Caco-2 (cell line): ENCODE measurements at regions of chr15 and their contacts with region 1.

Region 1: DNA sequence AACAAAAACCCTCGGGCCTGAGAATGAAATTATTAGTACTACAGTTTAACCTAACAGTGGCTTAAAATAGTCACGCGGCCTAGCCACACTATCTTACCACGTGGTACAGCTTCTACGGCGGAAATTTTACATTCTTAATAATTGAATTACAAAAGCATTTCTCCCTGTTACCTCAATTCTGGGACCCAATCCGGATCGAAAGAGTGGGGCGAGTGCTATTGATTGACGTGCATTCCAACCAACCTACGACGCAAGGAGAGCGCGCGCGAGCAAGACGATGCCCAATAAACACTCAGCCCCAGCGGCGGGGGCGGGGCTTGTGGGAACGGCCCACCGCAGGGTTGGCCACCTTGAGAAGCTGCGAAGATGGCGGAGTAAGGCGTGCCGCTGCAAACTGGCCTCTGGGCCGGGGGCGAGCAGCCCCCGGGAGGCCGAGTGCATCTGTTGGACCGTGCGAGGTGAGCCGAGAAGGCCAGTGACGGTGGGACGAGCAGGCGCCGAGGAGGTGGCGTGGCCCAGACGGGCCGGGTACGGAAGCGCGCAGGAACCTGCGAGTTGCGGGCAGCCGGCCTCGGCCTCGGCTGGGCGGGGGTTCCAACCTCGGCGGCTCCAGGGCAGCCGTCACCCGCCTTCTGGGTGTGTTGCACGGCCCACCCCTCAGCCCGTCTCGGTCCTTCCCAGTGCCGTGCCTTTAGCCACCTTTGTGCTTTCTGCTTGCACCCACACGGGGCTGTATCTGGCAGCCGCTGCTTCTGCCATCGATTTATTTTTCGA is 48.6 kb downstream of the OIP5 start:
- DNase-seq: peak; percentile 98
- H3K4me3 ChIP-seq: peak overlapping the region; percentile 81
- H3K4me3 Mint-ChIP-seq: peak overlapping the region; percentile 95
- H3K27ac Mint-ChIP-seq: peak overlapping the region; percentile 97
- H3K4me1 ChIP-seq: peaks cover 11% of the 10 kb centered on the region; the same call in 1 of the 2 replicates
- H3K4me1 Mint-ChIP-seq: peaks cover 14% of the 10 kb centered on the region
- H3K27me3 ChIP-seq: no peaks in the 10 kb centered on the region
- H3K27me3 Mint-ChIP-seq: no peaks in the 10 kb centered on the region
- CTCF ChIP-seq: no peak

Region 2: GRCh38 chr15:41331833-41332787 is 48.3 kb after region 1 on chr15 and contains the start of gene OIP5:
- CTCF ChIA-PET with region 1: interaction called, 4 read pairs
- POLR2A ChIA-PET with region 1: interaction called, 10 read pairs
- intact Hi-C with region 1: loop called (anchors 2 kb)
- DNase-seq: peak; percentile 98 to 99
- H3K4me3 ChIP-seq: peak within 1 kb of the TSS; percentile 87
- H3K4me3 Mint-ChIP-seq: peak within 1 kb of the TSS; percentile 89
- H3K27ac Mint-ChIP-seq: peak within 1 kb of the TSS; percentile 97
- H3K4me1 ChIP-seq: peaks cover 4% of the 10 kb centered on the region; the same call in 1 of the 2 replicates
- H3K4me1 Mint-ChIP-seq: peaks cover 9% of the 10 kb centered on the region
- H3K27me3 ChIP-seq: no peaks in the 10 kb centered on the region
- H3K27me3 Mint-ChIP-seq: no peaks in the 10 kb centered on the region
- CTCF ChIP-seq: peak; percentile 63 to 82
- total RNA-seq, gene OIP5: 23.4 and 26.4 TPM in 2 replicates

Region 3: GRCh38 chr15:42495361-42496212 is 1211.7 kb after region 1 on chr15 and contains the start of gene SNAP23:
- CTCF ChIA-PET with region 1: no interaction called
- POLR2A ChIA-PET with region 1: interaction called, 11 read pairs
- intact Hi-C with region 1: no loop called
- DNase-seq: peak; percentile 92 to 93
- H3K4me3 ChIP-seq: peak within 1 kb of the TSS; percentile 56
- H3K4me3 Mint-ChIP-seq: peak within 1 kb of the TSS; percentile 84
- H3K27ac Mint-ChIP-seq: peak within 1 kb of the TSS; percentile 72
- H3K4me1 ChIP-seq: peaks cover 42% of the 10 kb centered on the region
- H3K4me1 Mint-ChIP-seq: peaks cover 42% of the 10 kb centered on the region
- H3K27me3 ChIP-seq: no peaks in the 10 kb centered on the region
- H3K27me3 Mint-ChIP-seq: no peaks in the 10 kb centered on the region
- CTCF ChIP-seq: no peak
- total RNA-seq, gene SNAP23: 92.2 and 97.5 TPM in 2 replicates